ENCODE measurements at regions of chr4 and their contacts with region 1.

Region 1: GRCh38 chr4:139603576-139604387 is 47.8 kb upstream of the SETD7 start:
- DNase-seq: peak; percentile 80
- H3K4me3 Mint-ChIP-seq: no peak overlapping the region
- H3K27ac Mint-ChIP-seq: no peak overlapping the region
- H3K4me1 Mint-ChIP-seq: peaks cover 41% of the 10 kb centered on the region
- H3K27me3 Mint-ChIP-seq: no peaks in the 10 kb centered on the region
- CTCF ChIP-seq: peak; percentile 49

Region 2: DNA sequence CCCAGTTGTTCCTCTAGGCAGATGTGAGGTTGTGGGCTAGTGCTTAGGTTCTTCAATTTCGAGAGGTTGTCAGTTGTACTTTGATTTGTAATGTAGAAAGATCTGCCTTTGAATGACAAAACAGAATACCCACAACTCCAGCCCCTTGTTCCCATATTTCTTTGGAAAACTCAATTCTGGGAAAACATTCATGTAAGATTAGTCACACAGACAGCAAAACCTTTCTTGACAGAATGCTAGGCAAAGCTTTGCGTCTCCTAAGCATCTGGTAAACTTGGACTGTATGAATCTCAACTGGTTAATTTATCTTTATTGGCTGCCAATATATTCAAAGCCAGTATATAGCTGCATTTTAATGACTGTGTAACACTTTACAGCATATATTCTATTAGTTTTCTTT is 553.3 kb before region 1 on chr4:
- CTCF ChIA-PET with region 1: no interaction called
- POLR2A ChIA-PET with region 1: no interaction called
- intact Hi-C with region 1: no loop called
- DNase-seq: no peak
- H3K4me3 Mint-ChIP-seq: no peak overlapping the region
- H3K27ac Mint-ChIP-seq: no peak overlapping the region
- H3K4me1 Mint-ChIP-seq: peaks cover 12% of the 10 kb centered on the region
- H3K27me3 Mint-ChIP-seq: no peaks in the 10 kb centered on the region
- CTCF ChIP-seq: no peak

Region 3: DNA sequence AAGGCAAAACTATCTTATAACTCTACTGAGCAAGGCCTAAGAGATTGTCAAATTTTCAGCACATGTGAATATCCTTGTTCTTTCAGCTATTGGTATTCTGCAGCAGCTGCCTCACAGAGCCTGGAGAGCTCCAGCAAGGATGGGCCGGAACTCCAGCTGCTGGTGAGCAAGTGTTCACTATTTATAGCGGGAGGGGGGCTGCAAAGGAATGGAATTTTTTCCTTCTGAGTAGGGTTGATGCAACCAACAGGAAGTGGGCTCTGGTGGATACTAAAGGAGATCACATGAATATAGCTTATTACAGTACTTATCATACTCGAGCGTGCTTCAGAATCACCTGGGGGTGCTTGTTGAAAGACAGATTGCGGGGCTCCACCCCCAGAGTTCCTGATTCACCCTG is 27.6 kb before region 1 on chr4:
- CTCF ChIA-PET with region 1: interaction called, 16 read pairs
- POLR2A ChIA-PET with region 1: interaction called, 3 read pairs
- intact Hi-C with region 1: no loop called
- DNase-seq: no peak
- H3K4me3 Mint-ChIP-seq: no peak overlapping the region
- H3K27ac Mint-ChIP-seq: no peak overlapping the region
- H3K4me1 Mint-ChIP-seq: no peaks in the 10 kb centered on the region
- H3K27me3 Mint-ChIP-seq: no peaks in the 10 kb centered on the region
- CTCF ChIP-seq: no peak

Region 4: GRCh38 chr4:139593091-139593564 is 10.7 kb before region 1 on chr4:
- CTCF ChIA-PET with region 1: interaction called, 10 read pairs
- POLR2A ChIA-PET with region 1: interaction called, 4 read pairs
- intact Hi-C with region 1: no loop called
- DNase-seq: no peak
- H3K4me3 Mint-ChIP-seq: no peak overlapping the region
- H3K27ac Mint-ChIP-seq: peak overlapping the region; percentile 14
- H3K4me1 Mint-ChIP-seq: peaks cover 26% of the 10 kb centered on the region
- H3K27me3 Mint-ChIP-seq: no peaks in the 10 kb centered on the region
- CTCF ChIP-seq: no peak

Region 5: GRCh38 chr4:139628184-139629012 is 24.6 kb after region 1 on chr4:
- CTCF ChIA-PET with region 1: interaction called, 52 read pairs
- POLR2A ChIA-PET with region 1: no interaction called
- intact Hi-C with region 1: no loop called
- DNase-seq: no peak
- H3K4me3 Mint-ChIP-seq: no peak overlapping the region
- H3K27ac Mint-ChIP-seq: no peak overlapping the region
- H3K4me1 Mint-ChIP-seq: peaks cover under 1% of the 10 kb centered on the region
- H3K27me3 Mint-ChIP-seq: no peaks in the 10 kb centered on the region
- CTCF ChIP-seq: no peak

Region 6: GRCh38 chr4:139642364-139642763 is 38.6 kb after region 1 on chr4:
- CTCF ChIA-PET with region 1: interaction called, 476 read pairs
- POLR2A ChIA-PET with region 1: interaction called, 9 read pairs
- intact Hi-C with region 1: no loop called
- DNase-seq: no peak
- H3K4me3 Mint-ChIP-seq: no peak overlapping the region
- H3K27ac Mint-ChIP-seq: no peak overlapping the region
- H3K4me1 Mint-ChIP-seq: peaks cover 40% of the 10 kb centered on the region
- H3K27me3 Mint-ChIP-seq: no peaks in the 10 kb centered on the region
- CTCF ChIP-seq: no peak

Region 7: GRCh38 chr4:139656614-139657486 is 53.1 kb after region 1 on chr4:
- CTCF ChIA-PET with region 1: interaction called, 476 read pairs
- POLR2A ChIA-PET with region 1: interaction called, 10 read pairs
- intact Hi-C with region 1: no loop called
- DNase-seq: peak; percentile 83
- H3K4me3 Mint-ChIP-seq: peak overlapping the region; percentile 64
- H3K27ac Mint-ChIP-seq: peak overlapping the region; percentile 85
- H3K4me1 Mint-ChIP-seq: peaks cover 25% of the 10 kb centered on the region
- H3K27me3 Mint-ChIP-seq: no peaks in the 10 kb centered on the region
- CTCF ChIP-seq: peak; percentile 63